PC-3 (cell line): ENCODE measurements at regions of chr3 and their contacts with region 1.

Region 1: DNA sequence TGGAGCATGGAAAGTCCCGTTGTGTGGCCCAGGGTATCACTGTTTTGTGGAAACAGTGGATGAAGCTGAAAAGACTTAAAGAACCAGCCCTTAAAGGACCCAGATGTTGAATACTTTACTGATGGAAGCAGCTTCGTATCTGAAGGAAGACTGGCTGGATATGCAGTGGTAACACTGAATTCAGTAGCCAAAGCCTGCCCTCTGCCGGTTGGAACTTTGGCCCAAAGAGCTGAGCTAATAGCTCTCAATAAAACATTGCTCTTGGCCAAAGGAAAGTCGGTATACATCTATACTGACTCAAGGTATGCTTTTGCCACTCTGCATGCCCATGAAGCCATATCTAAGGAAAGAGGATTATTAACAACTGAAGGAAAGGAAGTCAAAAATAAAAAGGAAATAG is 885.4 kb downstream of the PDCD6IP start:
- DNase-seq: peak; percentile 71
- ATAC-seq: peak; percentile 93
- H3K4me3 ChIP-seq: no peak overlapping the region
- H3K27ac ChIP-seq: no peak overlapping the region
- H3K4me1 ChIP-seq: no peaks in the 10 kb centered on the region
- H3K27me3 ChIP-seq: no peaks in the 10 kb centered on the region
- CTCF ChIP-seq: peak; percentile 75

Region 2: DNA sequence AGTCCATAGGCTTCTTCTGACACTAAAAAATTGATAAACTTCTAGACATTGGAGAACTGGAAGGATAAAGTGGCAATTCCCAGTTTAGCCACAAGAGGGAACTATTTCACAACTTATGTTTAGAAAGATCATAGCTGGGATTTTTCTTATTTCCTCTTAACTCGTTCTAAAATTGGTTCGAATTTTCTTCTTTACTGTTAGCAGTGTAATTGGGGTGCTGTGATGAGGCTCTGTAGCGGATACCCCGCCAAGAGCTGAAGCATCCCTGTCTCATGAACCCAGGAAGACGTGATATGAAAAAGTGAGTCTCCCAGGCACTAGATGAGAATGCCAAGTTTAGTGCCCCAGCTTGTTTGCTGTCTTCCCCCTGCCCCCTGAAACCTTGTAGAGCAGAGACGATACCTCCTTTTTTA is 800.3 kb before region 1 on chr3:
- CTCF ChIA-PET with region 1: interaction called, 16 read pairs
- POLR2A ChIA-PET with region 1: no interaction called
- intact Hi-C with region 1: loop called (anchors 1 kb)
- DNase-seq: peak; percentile 85
- ATAC-seq: peak; percentile 41
- H3K4me3 ChIP-seq: no peak overlapping the region
- H3K27ac ChIP-seq: no peak overlapping the region
- H3K4me1 ChIP-seq: no peaks in the 10 kb centered on the region
- H3K27me3 ChIP-seq: no peaks in the 10 kb centered on the region
- CTCF ChIP-seq: peak; percentile 96

Region 3: GRCh38 chr3:34260271-34261006 is 423.4 kb before region 1 on chr3:
- CTCF ChIA-PET with region 1: interaction called, 23 read pairs
- POLR2A ChIA-PET with region 1: no interaction called
- intact Hi-C with region 1: loop called (anchors 1 kb)
- DNase-seq: peak; percentile 62
- ATAC-seq: peak; percentile 76; the same call in 1 of the 2 replicates
- H3K4me3 ChIP-seq: no peak overlapping the region
- H3K27ac ChIP-seq: no peak overlapping the region
- H3K4me1 ChIP-seq: no peaks in the 10 kb centered on the region
- H3K27me3 ChIP-seq: 0 out of 2 replicates have a peak, but pooled peaks cover 2% of the 10 kb centered on the region
- CTCF ChIP-seq: peak; percentile 74

Region 4: DNA sequence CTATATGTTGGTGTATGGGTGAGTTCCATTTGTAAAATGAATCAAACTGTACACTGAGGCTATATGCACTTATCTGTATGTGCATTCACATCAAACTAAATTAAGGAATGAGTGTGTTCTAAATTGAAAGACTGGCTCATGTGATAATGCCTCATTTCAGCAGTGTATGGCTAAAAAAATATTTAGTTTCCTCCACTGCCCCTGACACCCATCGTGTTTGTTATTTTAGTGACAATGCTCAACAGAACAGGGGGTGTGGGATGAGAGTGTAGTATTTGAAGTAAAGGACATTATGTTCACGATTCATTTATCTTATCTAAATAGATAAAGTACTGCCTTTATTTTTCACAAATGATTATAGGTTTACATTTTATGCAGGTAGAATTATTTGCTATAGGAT is 654.3 kb after region 1 on chr3:
- CTCF ChIA-PET with region 1: no interaction called
- POLR2A ChIA-PET with region 1: no interaction called
- intact Hi-C with region 1: no loop called
- DNase-seq: no peak
- ATAC-seq: no peak
- H3K4me3 ChIP-seq: no peak overlapping the region
- H3K27ac ChIP-seq: no peak overlapping the region
- H3K4me1 ChIP-seq: no peaks in the 10 kb centered on the region
- H3K27me3 ChIP-seq: no peaks in the 10 kb centered on the region
- CTCF ChIP-seq: no peak